ENCODE measurements at regions of chr3 and their contacts with region 1.

Region 1: DNA sequence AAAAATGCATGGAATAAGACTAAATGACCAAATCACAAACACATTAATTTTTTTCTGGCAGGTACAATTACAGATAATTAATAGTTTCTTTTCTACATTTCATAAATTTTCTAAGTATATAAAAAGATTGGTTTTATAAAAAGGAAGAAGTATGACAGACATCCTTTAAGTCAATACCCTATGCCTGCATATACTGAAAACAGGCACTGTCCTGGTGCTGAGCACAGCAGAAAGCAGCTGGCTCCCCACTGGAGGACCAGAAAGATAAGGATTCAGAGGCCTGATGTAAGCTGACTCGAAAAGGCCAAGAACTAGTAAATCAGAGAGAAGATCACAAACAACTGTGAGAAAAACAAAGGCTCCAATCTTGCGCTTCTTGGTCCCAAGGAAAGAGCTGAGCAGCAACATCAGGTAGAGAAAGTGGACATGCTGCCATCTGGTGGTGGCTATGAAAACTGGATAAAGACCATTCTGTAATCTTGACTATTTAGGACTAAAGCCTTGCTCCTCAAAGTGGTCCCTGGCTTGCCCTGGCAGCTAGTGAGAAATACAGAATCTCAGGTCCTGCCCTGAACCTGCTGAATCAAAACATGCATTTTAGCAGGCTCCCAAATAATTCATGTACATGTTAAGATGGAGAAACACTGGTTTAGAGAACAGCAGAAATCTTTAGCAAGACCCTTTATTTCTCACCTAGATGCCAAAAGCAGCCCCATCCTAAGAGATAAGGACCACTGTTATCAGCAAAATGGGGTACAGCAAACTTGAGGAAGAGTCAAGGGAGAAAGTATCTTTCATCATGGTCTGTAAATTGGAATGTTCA is 76.0 kb downstream of the TRANK1 start:
- ATAC-seq: peak; percentile 74 to 94 (median 83)
- H3K4me3 ChIP-seq: no peak overlapping the region
- H3K27ac ChIP-seq: no peak overlapping the region
- H3K4me1 ChIP-seq: peaks cover 2% of the 10 kb centered on the region in 2 donors

Region 2: GRCh38 chr3:36741285-36741684 is 127.5 kb before region 1 on chr3:
- in situ Hi-C with region 1: loop called in 5 of 9 experiments (anchors 10 to 25 kb)
- ATAC-seq: peak in 3 of 8 experiments; percentile 20 to 29 (median 25)
- H3K4me3 ChIP-seq: no peak overlapping the region
- H3K27ac ChIP-seq: no peak overlapping the region
- H3K4me1 ChIP-seq: peaks cover 0 to 3% of the 10 kb centered on the region in 2 donors

Region 3: GRCh38 chr3:37096288-37096687 is 227.5 kb after region 1 on chr3:
- in situ Hi-C with region 1: no loop called
- ATAC-seq: no peak
- H3K4me3 ChIP-seq: no peak overlapping the region
- H3K27ac ChIP-seq: no peak overlapping the region
- H3K4me1 ChIP-seq: peaks cover 0 to 5% of the 10 kb centered on the region in 2 donors

Region 4: DNA sequence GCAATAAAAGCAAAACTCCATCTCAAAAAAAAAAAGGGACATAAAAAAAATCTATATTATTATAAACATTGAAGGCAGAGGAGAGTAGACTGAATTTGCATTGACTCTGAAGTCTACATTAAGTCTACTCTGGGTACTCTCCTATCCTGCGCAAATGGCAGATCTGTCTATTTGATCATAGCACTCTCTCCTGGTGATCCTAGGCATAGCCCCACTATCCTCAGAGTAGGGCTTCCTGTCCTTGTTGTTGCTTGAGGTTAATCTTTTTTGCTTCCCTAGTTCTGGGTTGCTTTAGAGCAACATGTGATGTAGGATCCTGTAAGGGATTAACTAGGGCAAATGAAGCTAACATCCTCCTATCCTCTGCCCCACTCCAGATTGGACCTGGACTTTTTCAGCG is 387.6 kb after region 1 on chr3:
- in situ Hi-C with region 1: no loop called
- ATAC-seq: no peak
- H3K4me3 ChIP-seq: no peak overlapping the region
- H3K27ac ChIP-seq: no peak overlapping the region
- H3K4me1 ChIP-seq: no peaks in the 10 kb centered on the region

Measured in motor neuron (in vitro differentiated cells).